Naive thymus-derived CD4-positive, alpha-beta T cell (primary cell): ENCODE measurements at regions of chr19 and their contacts with region 1.

Region 1: GRCh38 chr19:3108775-3109174 is 14.6 kb downstream of the GNA11 start:
- DNase-seq: peak in 8 of 9 donors; percentile 51 to 72 (median 65)
- ATAC-seq: peak; percentile 76
- H3K4me3 ChIP-seq: no peak overlapping the region
- H3K4me3 Mint-ChIP-seq: peak overlapping the region in 1 of 10 donors; percentile 46
- H3K27ac ChIP-seq: no peak overlapping the region
- H3K27ac Mint-ChIP-seq: peak overlapping the region in 5 of 9 donors; percentile 43 to 70 (median 57)
- H3K4me1 ChIP-seq: peaks cover 8% of the 10 kb centered on the region in 2 donors
- H3K4me1 Mint-ChIP-seq: peaks cover 4 to 15% (median 11%) of the 10 kb centered on the region in 7 donors
- H3K27me3 ChIP-seq: no peaks in the 10 kb centered on the region
- H3K27me3 Mint-ChIP-seq: peaks cover 0 to 2% (median 0%) of the 10 kb centered on the region in 5 donors

Region 2: DNA sequence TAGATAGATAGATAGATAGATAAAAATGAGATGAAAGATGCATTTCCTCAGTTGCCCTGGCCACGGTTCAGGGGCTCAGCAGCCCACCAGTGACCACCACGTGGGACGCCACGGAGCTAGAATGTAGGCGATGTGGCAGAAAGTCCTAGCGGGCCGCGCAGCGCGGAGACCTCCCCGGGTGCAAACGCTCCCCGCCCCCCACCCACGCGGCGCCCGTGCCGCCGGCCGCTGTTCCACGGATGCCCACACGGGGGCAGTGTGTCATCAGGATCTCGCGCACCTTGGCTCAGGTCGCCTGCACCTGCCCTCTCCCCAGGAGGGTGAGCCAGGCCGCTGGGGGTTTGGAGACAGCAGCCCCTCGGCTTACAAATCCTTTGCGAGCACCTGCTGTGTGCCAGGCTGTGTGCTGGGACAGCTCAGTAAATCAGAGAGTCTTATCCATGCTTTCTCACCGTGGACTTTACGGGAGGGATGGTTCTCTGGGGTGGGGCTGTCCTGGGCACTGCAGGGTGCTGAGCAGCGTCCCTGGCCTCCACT is 32.8 kb before region 1 on chr19:
- CTCF ChIA-PET with region 1: interaction called, 110 read pairs
- POLR2A ChIA-PET with region 1: interaction called, 7 read pairs
- intact Hi-C with region 1: loop called (anchors 1 to 2 kb)
- DNase-seq: peak; percentile 63 to 85 (median 71)
- ATAC-seq: peak; percentile 99
- H3K4me3 ChIP-seq: no peak overlapping the region
- H3K4me3 Mint-ChIP-seq: peak overlapping the region in 4 of 10 donors; percentile 44 to 68 (median 50)
- H3K27ac ChIP-seq: no peak overlapping the region
- H3K27ac Mint-ChIP-seq: no peak overlapping the region
- H3K4me1 ChIP-seq: peaks cover 0 to 9% of the 10 kb centered on the region in 2 donors
- H3K4me1 Mint-ChIP-seq: peaks cover 0 to 10% (median 4%) of the 10 kb centered on the region in 7 donors
- H3K27me3 ChIP-seq: no peaks in the 10 kb centered on the region
- H3K27me3 Mint-ChIP-seq: peaks cover 0 to 6% (median 0%) of the 10 kb centered on the region in 5 donors

Region 3: DNA sequence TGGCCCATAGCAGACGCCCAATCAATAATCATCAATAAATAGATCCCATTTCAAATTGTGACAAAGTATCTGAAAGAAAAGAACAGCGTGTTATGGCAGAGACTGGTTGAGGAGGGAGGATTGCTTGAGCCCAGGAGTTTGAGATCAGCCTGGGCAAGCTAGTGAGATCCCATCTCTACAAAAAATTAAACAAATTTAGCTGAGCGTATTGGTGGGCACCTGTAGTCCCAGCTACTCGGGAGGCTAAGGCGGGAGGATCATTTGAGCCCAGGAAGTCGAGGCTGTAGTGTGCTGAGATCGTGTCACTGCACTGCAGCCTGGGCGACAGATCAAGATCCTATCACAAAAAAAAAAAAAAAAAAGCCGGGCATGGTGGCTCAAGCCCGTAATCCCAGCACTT is 21.0 kb before region 1 on chr19:
- CTCF ChIA-PET with region 1: interaction called, 14 read pairs
- POLR2A ChIA-PET with region 1: no interaction called
- intact Hi-C with region 1: no loop called
- DNase-seq: no peak
- ATAC-seq: no peak
- H3K4me3 ChIP-seq: no peak overlapping the region
- H3K4me3 Mint-ChIP-seq: no peak overlapping the region
- H3K27ac ChIP-seq: no peak overlapping the region
- H3K27ac Mint-ChIP-seq: no peak overlapping the region
- H3K4me1 ChIP-seq: no peaks in the 10 kb centered on the region
- H3K4me1 Mint-ChIP-seq: no peaks in the 10 kb centered on the region
- H3K27me3 ChIP-seq: no peaks in the 10 kb centered on the region
- H3K27me3 Mint-ChIP-seq: peaks cover 0 to 14% (median 0%) of the 10 kb centered on the region in 5 donors

Region 4: DNA sequence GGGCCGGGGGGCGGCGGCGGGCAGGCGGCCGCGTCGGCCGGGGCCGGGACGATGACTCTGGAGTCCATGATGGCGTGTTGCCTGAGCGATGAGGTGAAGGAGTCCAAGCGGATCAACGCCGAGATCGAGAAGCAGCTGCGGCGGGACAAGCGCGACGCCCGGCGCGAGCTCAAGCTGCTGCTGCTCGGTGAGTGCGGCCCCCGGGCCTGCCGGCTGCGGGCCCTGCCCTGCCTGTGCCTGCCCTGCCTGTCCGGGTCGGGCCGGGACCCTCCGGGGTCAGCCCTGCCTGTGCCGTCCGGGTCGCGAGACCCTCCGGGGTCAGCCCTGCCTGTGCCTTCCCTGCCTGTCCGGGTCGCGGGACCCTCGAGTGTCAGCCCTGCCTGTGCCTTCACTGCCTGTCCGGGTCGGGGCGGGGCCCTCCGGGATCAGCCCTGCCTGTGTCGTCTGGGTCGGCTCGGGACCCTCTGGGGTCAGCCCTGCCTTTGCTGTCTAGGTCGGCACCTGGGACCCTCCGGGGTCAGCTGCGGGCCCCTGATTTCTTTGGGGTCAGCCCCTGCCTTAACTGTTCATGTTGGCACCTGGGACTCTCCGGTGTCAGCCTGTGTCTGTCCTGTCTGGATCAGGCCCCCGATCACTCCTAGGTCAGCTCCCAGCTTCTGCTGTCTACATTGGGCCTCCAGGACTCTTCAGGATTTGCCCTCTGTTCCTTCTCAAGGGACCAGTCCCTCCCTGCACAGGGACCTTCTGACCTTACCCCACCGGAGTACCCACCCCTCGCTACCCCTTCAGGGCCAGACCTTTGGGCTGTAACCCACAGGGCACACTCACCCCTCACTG is 14.0 kb before region 1 on chr19:
- CTCF ChIA-PET with region 1: interaction called, 9 read pairs
- POLR2A ChIA-PET with region 1: interaction called, 5 read pairs
- intact Hi-C with region 1: loop called in 1 of 2 experiments (anchors 1 kb)
- DNase-seq: peak in 3 of 9 donors; percentile 27 to 45 (median 30)
- ATAC-seq: peak; percentile 10
- H3K4me3 ChIP-seq: peak overlapping the region; percentile 48
- H3K4me3 Mint-ChIP-seq: peak overlapping the region; percentile 59 to 93 (median 86)
- H3K27ac ChIP-seq: peak overlapping the region; percentile 52
- H3K27ac Mint-ChIP-seq: peak overlapping the region in 8 of 9 donors; percentile 37 to 91 (median 72)
- H3K4me1 ChIP-seq: peaks cover 20 to 36% of the 10 kb centered on the region in 2 donors
- H3K4me1 Mint-ChIP-seq: peaks cover 14 to 39% (median 28%) of the 10 kb centered on the region in 7 donors
- H3K27me3 ChIP-seq: peaks cover 0 to 5% of the 10 kb centered on the region in 2 donors
- H3K27me3 Mint-ChIP-seq: peaks cover 0 to 43% (median 5%) of the 10 kb centered on the region in 5 donors